CD8-positive, alpha-beta T cell (primary cell): ENCODE measurements at regions of chr4 and their contacts with region 1.

Region 1: DNA sequence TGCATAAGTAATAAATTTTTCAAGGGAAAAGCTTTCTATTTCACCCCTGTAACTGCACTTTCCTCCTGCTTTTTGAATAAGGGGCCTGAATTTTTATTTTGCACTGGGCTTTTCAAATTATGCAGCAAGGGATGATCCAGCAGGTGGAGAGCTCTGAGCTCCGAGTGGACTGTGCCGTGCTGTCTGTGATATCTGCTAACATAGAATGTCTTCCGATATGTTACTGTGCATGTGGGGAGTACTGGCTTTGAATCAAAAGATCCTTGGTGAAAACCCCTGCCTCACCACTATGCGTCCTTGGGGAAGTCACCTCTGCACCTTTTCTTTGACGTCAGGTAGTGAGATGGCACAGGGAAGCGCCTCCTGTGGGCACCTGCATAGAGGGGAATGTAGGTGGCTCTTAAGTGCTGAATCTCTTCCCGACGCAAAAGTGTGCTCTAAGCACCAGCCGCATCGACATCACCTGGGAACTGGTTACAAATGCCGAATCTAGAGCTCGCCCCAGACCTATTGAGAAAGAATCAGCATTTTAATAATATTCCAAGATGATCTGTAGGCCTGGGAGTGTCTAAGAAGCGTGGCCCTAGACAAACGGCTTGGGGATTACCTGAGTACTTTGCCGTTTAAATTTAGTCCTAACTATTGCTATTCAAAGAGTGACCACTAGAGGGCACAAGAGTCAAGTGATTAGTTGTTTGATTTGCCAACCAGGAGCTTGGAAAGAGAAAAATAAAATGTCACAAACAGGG is 19.2 kb upstream of the WFS1 start:
- DNase-seq: peak in 3 of 9 experiments; percentile 35 to 79 (median 75)
- ATAC-seq: peak; percentile 62
- H3K4me3 ChIP-seq: no peak overlapping the region
- H3K4me3 Mint-ChIP-seq: no peak overlapping the region
- H3K27ac ChIP-seq: no peak overlapping the region
- H3K27ac Mint-ChIP-seq: no peak overlapping the region
- H3K4me1 ChIP-seq: no peaks in the 10 kb centered on the region
- H3K4me1 Mint-ChIP-seq: no peaks in the 10 kb centered on the region
- H3K27me3 ChIP-seq: peaks cover 6 to 7% of the 10 kb centered on the region in 2 experiments
- H3K27me3 Mint-ChIP-seq: peaks cover 37% of the 10 kb centered on the region
- CTCF ChIP-seq: peak; percentile 76

Region 2: DNA sequence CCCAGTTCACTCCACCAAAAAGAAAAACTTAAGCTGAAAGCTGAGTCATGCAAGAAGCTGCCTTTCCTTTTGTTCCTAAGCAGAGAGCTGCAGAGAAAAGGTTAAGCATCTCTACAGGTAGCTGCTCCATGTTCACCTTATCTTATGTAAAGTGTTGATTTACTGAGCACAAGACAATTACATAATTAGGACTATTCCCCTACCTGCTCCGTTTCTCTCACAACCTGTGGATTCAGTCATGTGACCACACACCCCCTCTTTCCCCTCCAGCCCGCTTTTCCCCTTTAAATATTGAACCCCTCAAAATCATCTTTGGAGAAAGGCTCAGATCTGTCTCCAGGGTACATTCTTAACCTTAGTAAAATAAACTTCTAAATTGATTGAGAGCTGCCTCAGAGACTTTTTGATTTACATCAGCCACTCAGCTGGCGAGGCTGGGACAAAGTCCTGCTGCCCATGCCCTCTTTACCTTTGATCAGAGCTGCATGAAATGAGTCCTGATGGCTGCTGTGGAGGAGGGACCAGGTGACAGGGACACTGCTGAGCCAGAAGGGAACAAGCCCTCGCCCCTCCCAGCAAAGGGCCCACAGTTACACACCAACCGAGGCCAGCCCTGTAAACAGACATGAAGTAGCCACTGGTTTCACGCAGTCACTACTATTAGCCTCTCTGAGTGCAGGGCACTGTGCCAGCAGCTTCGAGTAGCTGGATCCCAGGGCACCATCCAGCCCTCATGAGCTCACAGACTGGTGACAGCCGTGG is 178.3 kb before region 1 on chr4:
- CTCF ChIA-PET with region 1: no interaction called
- POLR2A ChIA-PET with region 1: no interaction called
- intact Hi-C with region 1: no loop called
- DNase-seq: no peak
- ATAC-seq: no peak
- H3K4me3 ChIP-seq: no peak overlapping the region
- H3K4me3 Mint-ChIP-seq: no peak overlapping the region
- H3K27ac ChIP-seq: no peak overlapping the region
- H3K27ac Mint-ChIP-seq: no peak overlapping the region
- H3K4me1 ChIP-seq: no peaks in the 10 kb centered on the region
- H3K4me1 Mint-ChIP-seq: no peaks in the 10 kb centered on the region
- H3K27me3 ChIP-seq: no peaks in the 10 kb centered on the region
- H3K27me3 Mint-ChIP-seq: peaks cover 4% of the 10 kb centered on the region
- CTCF ChIP-seq: no peak

Region 3: GRCh38 chr4:6235901-6236640 is 14.3 kb before region 1 on chr4:
- CTCF ChIA-PET with region 1: interaction called, 10 read pairs
- POLR2A ChIA-PET with region 1: no interaction called
- intact Hi-C with region 1: no loop called
- DNase-seq: no peak
- ATAC-seq: no peak
- H3K4me3 ChIP-seq: no peak overlapping the region
- H3K4me3 Mint-ChIP-seq: no peak overlapping the region
- H3K27ac ChIP-seq: no peak overlapping the region
- H3K27ac Mint-ChIP-seq: no peak overlapping the region
- H3K4me1 ChIP-seq: no peaks in the 10 kb centered on the region
- H3K4me1 Mint-ChIP-seq: no peaks in the 10 kb centered on the region
- H3K27me3 ChIP-seq: no peaks in the 10 kb centered on the region
- H3K27me3 Mint-ChIP-seq: no peaks in the 10 kb centered on the region
- CTCF ChIP-seq: no peak

Region 4: GRCh38 chr4:6269616-6270511 is 19.5 kb after region 1 on chr4 and contains the start of gene WFS1:
- CTCF ChIA-PET with region 1: interaction called, 42 read pairs
- POLR2A ChIA-PET with region 1: interaction called, 6 read pairs
- intact Hi-C with region 1: loop called in 1 of 2 experiments (anchors 1 kb)
- DNase-seq: peak; percentile 93 to 99 (median 97)
- ATAC-seq: peak; percentile 98
- H3K4me3 ChIP-seq: peak within 1 kb of the TSS; percentile 56 to 70
- H3K4me3 Mint-ChIP-seq: peak within 1 kb of the TSS; percentile 87
- H3K27ac ChIP-seq: peak within 1 kb of the TSS in 1 of 2 experiments; percentile 11
- H3K27ac Mint-ChIP-seq: peak within 1 kb of the TSS; percentile 41
- H3K4me1 ChIP-seq: peaks cover 13% of the 10 kb centered on the region
- H3K4me1 Mint-ChIP-seq: peaks cover 20% of the 10 kb centered on the region
- H3K27me3 ChIP-seq: no peaks in the 10 kb centered on the region
- H3K27me3 Mint-ChIP-seq: no peaks in the 10 kb centered on the region
- CTCF ChIP-seq: no peak
- total RNA-seq, gene WFS1: 1.2 to 1.8 TPM

Region 5: DNA sequence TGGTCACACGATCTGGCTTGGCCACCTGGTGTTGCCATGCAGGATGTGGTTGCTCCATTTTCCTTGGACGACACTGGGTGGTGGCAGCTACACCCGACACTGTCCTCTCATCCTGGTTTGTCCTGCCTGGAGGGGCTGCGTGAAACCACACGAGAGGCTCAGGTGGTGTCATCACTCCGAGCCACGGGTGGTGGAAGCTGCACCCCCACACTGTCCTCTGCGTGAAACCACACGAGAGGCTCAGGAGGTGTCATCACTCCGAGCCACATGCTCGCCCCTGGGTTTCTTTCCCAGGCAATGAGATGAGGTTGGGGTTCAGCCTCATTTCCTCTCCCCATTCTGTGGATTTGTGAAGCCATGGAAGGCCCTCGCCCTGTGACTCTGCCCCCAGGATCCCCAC is 53.5 kb after region 1 on chr4:
- CTCF ChIA-PET with region 1: no interaction called
- POLR2A ChIA-PET with region 1: no interaction called
- intact Hi-C with region 1: no loop called
- DNase-seq: no peak
- ATAC-seq: no peak
- H3K4me3 ChIP-seq: no peak overlapping the region
- H3K4me3 Mint-ChIP-seq: no peak overlapping the region
- H3K27ac ChIP-seq: no peak overlapping the region
- H3K27ac Mint-ChIP-seq: no peak overlapping the region
- H3K4me1 ChIP-seq: no peaks in the 10 kb centered on the region
- H3K4me1 Mint-ChIP-seq: no peaks in the 10 kb centered on the region
- H3K27me3 ChIP-seq: no peaks in the 10 kb centered on the region
- H3K27me3 Mint-ChIP-seq: peaks cover 14% of the 10 kb centered on the region
- CTCF ChIP-seq: no peak

Region 6: DNA sequence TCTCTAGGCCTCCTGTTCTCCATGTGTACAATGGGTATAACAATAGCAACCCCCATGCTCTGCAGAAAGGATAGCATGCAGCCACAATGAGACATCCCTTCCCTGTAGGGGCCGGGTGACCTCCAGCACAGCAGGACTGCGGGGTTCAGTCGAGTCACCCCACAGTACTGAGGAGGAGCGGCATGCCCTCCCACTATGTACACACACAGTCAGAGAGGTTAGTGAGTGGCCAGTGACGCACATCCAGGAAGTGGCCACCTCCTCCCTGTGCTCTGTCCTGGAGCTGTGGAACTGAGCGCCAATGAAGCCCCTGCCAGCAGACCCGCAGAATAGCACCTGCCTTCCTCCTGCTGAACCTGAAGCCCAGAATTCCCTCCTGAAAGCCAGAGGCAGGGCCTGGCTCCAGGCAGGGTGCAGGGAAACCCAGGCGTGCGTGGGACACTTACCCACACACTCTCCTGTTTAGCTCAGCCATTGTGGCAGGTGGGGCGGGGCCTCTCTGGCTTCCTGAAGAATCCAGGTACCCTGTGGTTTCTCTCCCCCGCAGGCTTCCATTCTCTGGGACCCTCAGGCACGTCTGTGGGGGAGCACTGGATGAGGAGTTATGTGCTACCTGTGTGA is 69.2 kb after region 1 on chr4:
- CTCF ChIA-PET with region 1: interaction called, 336 read pairs
- POLR2A ChIA-PET with region 1: no interaction called
- intact Hi-C with region 1: no loop called
- DNase-seq: no peak
- ATAC-seq: no peak
- H3K4me3 ChIP-seq: no peak overlapping the region
- H3K4me3 Mint-ChIP-seq: no peak overlapping the region
- H3K27ac ChIP-seq: no peak overlapping the region
- H3K27ac Mint-ChIP-seq: no peak overlapping the region
- H3K4me1 ChIP-seq: no peaks in the 10 kb centered on the region
- H3K4me1 Mint-ChIP-seq: peaks cover under 1% of the 10 kb centered on the region
- H3K27me3 ChIP-seq: no peaks in the 10 kb centered on the region
- H3K27me3 Mint-ChIP-seq: peaks cover 37% of the 10 kb centered on the region
- CTCF ChIP-seq: no peak

Region 7: GRCh38 chr4:6546681-6547447 is 296.5 kb after region 1 on chr4:
- CTCF ChIA-PET with region 1: interaction called, 9 read pairs
- POLR2A ChIA-PET with region 1: no interaction called
- intact Hi-C with region 1: loop called in 1 of 2 experiments (anchors 2 kb)
- DNase-seq: peak in 8 of 9 experiments; percentile 28 to 80 (median 51)
- ATAC-seq: peak; percentile 69
- H3K4me3 ChIP-seq: no peak overlapping the region
- H3K4me3 Mint-ChIP-seq: no peak overlapping the region
- H3K27ac ChIP-seq: no peak overlapping the region
- H3K27ac Mint-ChIP-seq: no peak overlapping the region
- H3K4me1 ChIP-seq: no peaks in the 10 kb centered on the region
- H3K4me1 Mint-ChIP-seq: no peaks in the 10 kb centered on the region
- H3K27me3 ChIP-seq: peaks cover 0 to 2% of the 10 kb centered on the region in 2 experiments
- H3K27me3 Mint-ChIP-seq: peaks cover 45% of the 10 kb centered on the region
- CTCF ChIP-seq: peak; percentile 85

Region 8: GRCh38 chr4:7500404-7500803 is 1250.0 kb after region 1 on chr4:
- CTCF ChIA-PET with region 1: no interaction called
- POLR2A ChIA-PET with region 1: no interaction called
- intact Hi-C with region 1: no loop called
- DNase-seq: no peak
- ATAC-seq: no peak
- H3K4me3 ChIP-seq: no peak overlapping the region
- H3K4me3 Mint-ChIP-seq: no peak overlapping the region
- H3K27ac ChIP-seq: no peak overlapping the region
- H3K27ac Mint-ChIP-seq: no peak overlapping the region
- H3K4me1 ChIP-seq: no peaks in the 10 kb centered on the region
- H3K4me1 Mint-ChIP-seq: no peaks in the 10 kb centered on the region
- H3K27me3 ChIP-seq: no peaks in the 10 kb centered on the region
- H3K27me3 Mint-ChIP-seq: peaks cover 8% of the 10 kb centered on the region
- CTCF ChIP-seq: no peak